ENCODE measurements at regions of chr18 and their contacts with region 1.

Region 1: GRCh38 chr18:9136315-9137155 is at the start of gene ANKRD12:
- DNase-seq: peak; percentile 97 to 99 (median 98)
- H3K4me3 ChIP-seq: peak within 1 kb of the TSS; percentile 52 to 88
- H3K4me3 Mint-ChIP-seq: peak within 1 kb of the TSS; percentile 97 to 99 (median 98)
- H3K27ac ChIP-seq: peak within 1 kb of the TSS; percentile 90
- H3K27ac Mint-ChIP-seq: peak within 1 kb of the TSS; percentile 99 to 100 (median 99)
- H3K4me1 ChIP-seq: peaks cover 72% of the 10 kb centered on the region
- H3K4me1 Mint-ChIP-seq: peaks cover 43 to 85% (median 57%) of the 10 kb centered on the region in 4 donors
- H3K27me3 ChIP-seq: no peaks in the 10 kb centered on the region
- H3K27me3 Mint-ChIP-seq: peaks cover 0 to 2% of the 10 kb centered on the region in 2 donors
- total RNA-seq, gene ANKRD12: 262 to 280 TPM

Region 2: GRCh38 chr18:8704361-8705279 is 431.9 kb before region 1 on chr18:
- CTCF ChIA-PET with region 1: no interaction called
- POLR2A ChIA-PET with region 1: no interaction called
- intact Hi-C with region 1: loop called (anchors 10 kb)
- DNase-seq: peak; percentile 76 to 86 (median 79)
- H3K4me3 ChIP-seq: peak overlapping the region; percentile 54 to 73
- H3K4me3 Mint-ChIP-seq: peak overlapping the region; percentile 87 to 96 (median 91)
- H3K27ac ChIP-seq: peak overlapping the region; percentile 48
- H3K27ac Mint-ChIP-seq: peak overlapping the region in 4 of 7 donors; percentile 50 to 79 (median 72)
- H3K4me1 ChIP-seq: peaks cover 26% of the 10 kb centered on the region
- H3K4me1 Mint-ChIP-seq: peaks cover 10 to 35% (median 15%) of the 10 kb centered on the region in 4 donors
- H3K27me3 ChIP-seq: peaks cover 29% of the 10 kb centered on the region
- H3K27me3 Mint-ChIP-seq: peaks cover 36 to 58% of the 10 kb centered on the region in 2 donors

Region 3: DNA sequence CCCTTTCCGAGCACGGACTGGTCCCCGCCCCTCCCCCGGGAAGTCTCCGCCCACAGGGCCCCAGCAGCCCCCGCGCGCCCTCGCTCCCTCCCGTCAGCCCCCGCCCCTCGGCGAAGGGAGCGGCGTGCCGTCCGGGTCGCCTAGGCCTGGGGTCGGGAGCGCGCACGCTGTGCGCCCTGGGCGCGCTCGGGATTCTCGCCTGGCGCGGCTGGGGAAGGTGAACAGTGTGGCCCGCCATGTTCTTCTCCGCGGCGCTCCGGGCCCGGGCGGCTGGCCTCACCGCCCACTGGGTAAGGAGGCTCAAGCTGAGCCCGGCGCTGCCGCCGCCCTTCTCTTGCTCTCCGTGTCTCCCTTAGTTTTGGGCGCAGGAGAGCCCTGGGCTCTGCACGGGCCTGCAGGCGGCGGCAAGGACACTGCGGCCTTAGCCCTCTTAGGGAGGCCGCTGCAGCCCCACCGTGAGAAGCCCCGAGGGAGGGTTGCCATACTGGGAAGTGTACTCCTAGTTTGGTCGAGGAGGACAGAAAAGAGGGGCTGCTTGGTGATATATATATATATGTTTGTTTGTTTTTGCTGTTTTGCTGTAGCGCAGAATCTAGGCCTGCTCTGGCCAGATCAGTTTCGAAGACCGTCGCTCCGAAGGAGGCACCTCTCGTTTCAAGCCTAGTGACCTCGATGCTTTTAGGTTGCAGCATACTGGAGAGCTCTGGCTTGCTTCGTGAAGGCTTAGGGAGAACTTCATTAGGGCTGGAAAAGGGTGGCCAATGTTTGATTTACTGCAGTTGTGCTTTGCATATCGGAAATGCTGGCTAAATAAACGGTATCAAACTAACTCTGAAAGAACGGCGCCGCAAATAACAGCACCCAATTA is 33.8 kb before region 1 on chr18 and contains the start of gene NDUFV2:
- CTCF ChIA-PET with region 1: interaction called, 67 read pairs
- POLR2A ChIA-PET with region 1: interaction called, 823 read pairs
- intact Hi-C with region 1: loop called (anchors 1 kb)
- DNase-seq: peak; percentile 95 to 97 (median 97)
- H3K4me3 ChIP-seq: peak within 1 kb of the TSS; percentile 81 to 92
- H3K4me3 Mint-ChIP-seq: peak within 1 kb of the TSS; percentile 89 to 96 (median 94)
- H3K27ac ChIP-seq: peak within 1 kb of the TSS; percentile 82
- H3K27ac Mint-ChIP-seq: peak within 1 kb of the TSS; percentile 94 to 99 (median 97)
- H3K4me1 ChIP-seq: peaks cover 55% of the 10 kb centered on the region
- H3K4me1 Mint-ChIP-seq: peaks cover 37 to 65% (median 52%) of the 10 kb centered on the region in 4 donors
- H3K27me3 ChIP-seq: no peaks in the 10 kb centered on the region
- H3K27me3 Mint-ChIP-seq: no peaks in the 10 kb centered on the region
- total RNA-seq, gene NDUFV2: 135 TPM

Region 4: GRCh38 chr18:9147440-9148202 is 11.1 kb after region 1 on chr18:
- CTCF ChIA-PET with region 1: interaction called, 14 read pairs
- POLR2A ChIA-PET with region 1: interaction called, 53 read pairs
- intact Hi-C with region 1: loop called (anchors 1 kb)
- DNase-seq: peak; percentile 55 to 67 (median 61)
- H3K4me3 ChIP-seq: no peak overlapping the region
- H3K4me3 Mint-ChIP-seq: peak overlapping the region in 6 of 8 donors; percentile 33 to 82 (median 67)
- H3K27ac ChIP-seq: peak overlapping the region; percentile 34
- H3K27ac Mint-ChIP-seq: peak overlapping the region; percentile 66 to 96 (median 76)
- H3K4me1 ChIP-seq: peaks cover 92% of the 10 kb centered on the region
- H3K4me1 Mint-ChIP-seq: peaks cover 55 to 87% (median 67%) of the 10 kb centered on the region in 4 donors
- H3K27me3 ChIP-seq: no peaks in the 10 kb centered on the region
- H3K27me3 Mint-ChIP-seq: no peaks in the 10 kb centered on the region

Region 5: DNA sequence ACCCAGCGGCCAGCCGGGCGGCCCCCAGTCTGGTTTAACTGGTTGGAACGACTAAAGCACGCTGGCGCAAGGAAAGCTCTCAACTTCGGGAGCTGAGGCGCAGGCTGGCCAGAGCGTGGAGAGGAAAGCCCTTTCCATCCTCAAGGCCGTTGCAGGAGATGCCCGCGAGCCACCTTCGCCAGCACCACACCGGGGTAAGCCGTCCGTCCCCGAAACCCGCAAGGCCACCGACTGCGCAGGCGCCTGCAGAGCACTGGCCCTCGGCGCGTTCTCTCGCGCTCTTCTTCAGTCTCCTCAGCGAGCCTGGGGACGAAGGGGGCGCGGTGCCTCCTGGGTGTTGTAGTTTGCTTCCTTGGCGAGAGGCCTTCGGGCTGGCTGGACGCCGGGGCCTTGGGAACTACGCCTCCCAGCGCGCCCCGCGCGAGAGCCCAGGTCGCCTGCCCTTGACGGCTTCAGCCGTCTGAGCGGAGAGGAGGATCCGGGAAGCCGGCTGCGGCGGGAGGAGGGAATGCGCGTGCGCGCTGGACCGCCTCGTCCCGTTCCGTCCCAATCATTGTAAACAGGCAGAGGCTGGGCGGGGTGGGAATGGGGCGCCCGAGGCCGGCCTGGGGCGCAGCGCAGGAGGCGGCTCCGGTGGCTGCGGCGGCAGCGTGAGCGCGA is 338.6 kb after region 1 on chr18 and contains the start of gene RALBP1:
- CTCF ChIA-PET with region 1: no interaction called
- POLR2A ChIA-PET with region 1: interaction called, 3 read pairs
- intact Hi-C with region 1: loop called (anchors 1 kb)
- DNase-seq: peak; percentile 96 to 98 (median 97)
- H3K4me3 ChIP-seq: peak within 1 kb of the TSS; percentile 86
- H3K4me3 Mint-ChIP-seq: peak within 1 kb of the TSS; percentile 94 to 99 (median 98)
- H3K27ac ChIP-seq: peak within 1 kb of the TSS; percentile 79
- H3K27ac Mint-ChIP-seq: peak within 1 kb of the TSS; percentile 95 to 98 (median 96)
- H3K4me1 ChIP-seq: peaks cover 24% of the 10 kb centered on the region
- H3K4me1 Mint-ChIP-seq: peaks cover 25 to 46% (median 33%) of the 10 kb centered on the region in 4 donors
- H3K27me3 ChIP-seq: no peaks in the 10 kb centered on the region
- H3K27me3 Mint-ChIP-seq: peaks cover 3 to 5% of the 10 kb centered on the region in 2 donors
- total RNA-seq, gene RALBP1: 44.9 to 49.9 TPM